ENCODE measurements at regions of chr3 and their contacts with region 1.

Region 1: DNA sequence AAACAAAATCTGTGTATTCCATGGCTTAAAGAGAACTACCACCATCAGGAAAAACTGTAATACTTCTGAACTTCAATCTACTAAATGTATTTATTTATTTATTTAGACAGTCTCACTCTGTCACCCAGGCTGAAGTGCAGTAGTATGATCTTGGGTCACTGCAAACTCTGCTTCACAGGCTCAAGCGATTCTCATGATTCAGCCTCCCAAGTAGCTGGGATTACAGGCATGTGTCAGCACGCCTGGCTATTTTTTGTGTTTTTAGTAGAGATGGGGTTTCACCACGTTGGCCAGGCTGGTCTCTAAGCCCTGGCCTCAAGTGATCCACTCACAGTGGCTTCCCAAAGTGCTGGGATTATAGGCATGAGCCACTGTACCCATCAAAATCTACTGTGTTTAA is 202.3 kb upstream of the POU1F1 start:
- DNase-seq: no peak
- H3K4me3 ChIP-seq: no peak overlapping the region
- H3K27ac ChIP-seq: no peak overlapping the region
- H3K4me1 ChIP-seq: no peaks in the 10 kb centered on the region
- CTCF ChIP-seq: no peak

Region 2: GRCh38 chr3:87462228-87462627 is 16.5 kb before region 1 on chr3:
- CTCF ChIA-PET with region 1: no interaction called
- POLR2A ChIA-PET with region 1: no interaction called
- intact Hi-C with region 1: loop called (anchors 1 kb)
- DNase-seq: no peak
- H3K4me3 ChIP-seq: no peak overlapping the region
- H3K27ac ChIP-seq: no peak overlapping the region
- H3K4me1 ChIP-seq: no peaks in the 10 kb centered on the region
- CTCF ChIP-seq: no peak

Region 3: GRCh38 chr3:87900061-87900460 is 421.3 kb after region 1 on chr3:
- CTCF ChIA-PET with region 1: no interaction called
- POLR2A ChIA-PET with region 1: no interaction called
- intact Hi-C with region 1: no loop called
- DNase-seq: peak; percentile 12
- H3K4me3 ChIP-seq: no peak overlapping the region
- H3K27ac ChIP-seq: no peak overlapping the region
- H3K4me1 ChIP-seq: no peaks in the 10 kb centered on the region
- CTCF ChIP-seq: peak; percentile 68

Region 4: GRCh38 chr3:87949189-87949878 is 470.6 kb after region 1 on chr3:
- CTCF ChIA-PET with region 1: no interaction called
- POLR2A ChIA-PET with region 1: no interaction called
- intact Hi-C with region 1: no loop called
- DNase-seq: no peak
- H3K4me3 ChIP-seq: no peak overlapping the region
- H3K27ac ChIP-seq: no peak overlapping the region
- H3K4me1 ChIP-seq: no peaks in the 10 kb centered on the region
- CTCF ChIP-seq: no peak